ENCODE measurements at regions of chr12 and their contacts with region 1.

Region 1: GRCh38 chr12:131830335-131830913 is 2.2 kb downstream of the MMP17 start:
- DNase-seq: peak; percentile 62
- ATAC-seq: peak; percentile 43
- H3K4me3 Mint-ChIP-seq: peak overlapping the region; percentile 65
- H3K27ac Mint-ChIP-seq: no peak overlapping the region
- H3K4me1 Mint-ChIP-seq: peaks cover 31% of the 10 kb centered on the region
- H3K27me3 Mint-ChIP-seq: peaks cover 9% of the 10 kb centered on the region
- CTCF ChIP-seq: no peak

Region 2: GRCh38 chr12:131104463-131105350 is 725.7 kb before region 1 on chr12:
- CTCF ChIA-PET with region 1: interaction called, 12 read pairs
- POLR2A ChIA-PET with region 1: no interaction called
- intact Hi-C with region 1: loop called (anchors 2 kb)
- DNase-seq: peak; percentile 66
- ATAC-seq: peak; percentile 75
- H3K4me3 Mint-ChIP-seq: no peak overlapping the region
- H3K27ac Mint-ChIP-seq: no peak overlapping the region
- H3K4me1 Mint-ChIP-seq: peaks cover 15% of the 10 kb centered on the region
- H3K27me3 Mint-ChIP-seq: peaks cover 8% of the 10 kb centered on the region
- CTCF ChIP-seq: peak; percentile 68

Region 3: GRCh38 chr12:131222256-131223139 is 607.9 kb before region 1 on chr12:
- CTCF ChIA-PET with region 1: no interaction called
- POLR2A ChIA-PET with region 1: no interaction called
- intact Hi-C with region 1: no loop called
- DNase-seq: no peak
- ATAC-seq: no peak
- H3K4me3 Mint-ChIP-seq: no peak overlapping the region
- H3K27ac Mint-ChIP-seq: no peak overlapping the region
- H3K4me1 Mint-ChIP-seq: peaks cover 15% of the 10 kb centered on the region
- H3K27me3 Mint-ChIP-seq: peaks cover 40% of the 10 kb centered on the region
- CTCF ChIP-seq: no peak

Region 4: DNA sequence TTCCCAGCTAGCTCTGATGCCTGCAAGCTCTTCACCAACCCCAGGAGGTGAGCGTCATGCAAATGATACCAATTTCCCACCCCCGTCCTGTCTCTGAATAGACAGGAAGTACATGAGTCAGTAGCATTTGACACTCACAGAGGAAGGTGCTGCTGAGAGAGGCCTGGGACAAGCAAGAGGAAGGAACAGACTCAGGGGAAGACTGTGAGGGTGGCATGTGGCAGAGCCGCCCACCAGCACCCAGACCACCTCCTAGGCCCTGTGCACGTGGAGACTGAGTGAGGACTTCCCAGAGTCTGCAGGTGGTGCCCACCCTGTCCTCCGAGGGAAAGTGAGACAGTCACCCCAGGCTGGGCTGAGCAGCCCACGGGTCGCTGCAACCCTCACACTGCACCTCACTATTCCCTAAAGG is 319.0 kb before region 1 on chr12:
- CTCF ChIA-PET with region 1: no interaction called
- POLR2A ChIA-PET with region 1: no interaction called
- intact Hi-C with region 1: loop called (anchors 5 kb)
- DNase-seq: peak; percentile 36
- ATAC-seq: peak; percentile 87
- H3K4me3 Mint-ChIP-seq: peak overlapping the region; percentile 48
- H3K27ac Mint-ChIP-seq: peak overlapping the region; percentile 54
- H3K4me1 Mint-ChIP-seq: peaks cover 20% of the 10 kb centered on the region
- H3K27me3 Mint-ChIP-seq: no peaks in the 10 kb centered on the region
- CTCF ChIP-seq: no peak

Region 5: GRCh38 chr12:131755305-131756113 is 74.9 kb before region 1 on chr12:
- CTCF ChIA-PET with region 1: interaction called, 33 read pairs
- POLR2A ChIA-PET with region 1: interaction called, 4 read pairs
- intact Hi-C with region 1: loop called (anchors 1 kb)
- DNase-seq: no peak
- ATAC-seq: peak; percentile 93
- H3K4me3 Mint-ChIP-seq: no peak overlapping the region
- H3K27ac Mint-ChIP-seq: no peak overlapping the region
- H3K4me1 Mint-ChIP-seq: peaks cover 7% of the 10 kb centered on the region
- H3K27me3 Mint-ChIP-seq: no peaks in the 10 kb centered on the region
- CTCF ChIP-seq: no peak

Region 6: GRCh38 chr12:131850856-131851559 is 20.6 kb after region 1 on chr12:
- CTCF ChIA-PET with region 1: no interaction called
- POLR2A ChIA-PET with region 1: no interaction called
- intact Hi-C with region 1: no loop called
- DNase-seq: peak; percentile 42
- ATAC-seq: peak; percentile 59
- H3K4me3 Mint-ChIP-seq: no peak overlapping the region
- H3K27ac Mint-ChIP-seq: no peak overlapping the region
- H3K4me1 Mint-ChIP-seq: peaks cover 16% of the 10 kb centered on the region
- H3K27me3 Mint-ChIP-seq: no peaks in the 10 kb centered on the region
- CTCF ChIP-seq: no peak

Region 7: GRCh38 chr12:131894313-131894860 is 64.0 kb after region 1 on chr12 and contains the start of gene ULK1:
- CTCF ChIA-PET with region 1: no interaction called
- POLR2A ChIA-PET with region 1: no interaction called
- intact Hi-C with region 1: loop called (anchors 1 kb)
- DNase-seq: peak; percentile 97
- ATAC-seq: peak; percentile 86
- H3K4me3 Mint-ChIP-seq: peak within 1 kb of the TSS; percentile 82
- H3K27ac Mint-ChIP-seq: peak within 1 kb of the TSS; percentile 46
- H3K4me1 Mint-ChIP-seq: peaks cover 22% of the 10 kb centered on the region
- H3K27me3 Mint-ChIP-seq: peaks cover 3% of the 10 kb centered on the region
- CTCF ChIP-seq: no peak
- total RNA-seq, gene ULK1: 20.1 and 27.0 TPM in 2 replicates

Region 8: GRCh38 chr12:131949431-131950181 is 119.2 kb after region 1 on chr12 and contains the start of gene EP400:
- CTCF ChIA-PET with region 1: interaction called, 4 read pairs
- POLR2A ChIA-PET with region 1: no interaction called
- intact Hi-C with region 1: loop called (anchors 1 kb)
- DNase-seq: peak; percentile 92
- ATAC-seq: peak; percentile 97
- H3K4me3 Mint-ChIP-seq: peak within 1 kb of the TSS; percentile 93
- H3K27ac Mint-ChIP-seq: peak within 1 kb of the TSS; percentile 80
- H3K4me1 Mint-ChIP-seq: peaks cover 32% of the 10 kb centered on the region
- H3K27me3 Mint-ChIP-seq: no peaks in the 10 kb centered on the region
- CTCF ChIP-seq: no peak
- total RNA-seq, gene EP400: 57.8 and 65.6 TPM in 2 replicates